Sciatic nerve (tissue), 2 donors: ENCODE measurements at regions of chr2 and their contacts with region 1.

Region 1: DNA sequence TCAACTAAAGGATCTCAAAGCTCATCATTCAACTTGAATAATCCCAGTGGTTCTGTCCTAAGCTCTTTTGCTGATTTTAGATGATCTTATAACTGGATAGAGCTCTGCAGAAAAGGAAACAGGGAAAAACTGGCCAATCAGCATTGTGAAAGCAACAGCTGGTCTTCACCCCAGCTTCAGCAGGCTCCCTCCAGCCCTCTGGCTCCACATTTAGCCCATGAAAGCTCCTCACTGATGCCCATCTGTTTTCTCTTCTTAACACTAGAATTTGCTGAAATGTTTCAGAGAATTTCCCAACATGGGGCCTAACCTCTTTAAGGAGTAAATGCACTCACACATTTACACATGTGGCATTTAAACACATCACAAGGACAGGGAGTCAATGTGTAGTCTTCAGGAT is 223.3 kb downstream of the CNTNAP5 start:
- DNase-seq: no peak
- ATAC-seq: no peak

Region 2: GRCh38 chr2:122748552-122749011 is 1499.8 kb before region 1 on chr2:
- intact Hi-C with region 1: loop called (anchors 5 kb)
- DNase-seq: no peak
- ATAC-seq: no peak